Adrenal gland (tissue), 19 donors: ENCODE measurements at regions of chr12 and their contacts with region 1.

Region 1: GRCh38 chr12:127685931-127686330 is 581.0 kb upstream of the TMEM132C start:
- DNase-seq: no peak
- H3K4me3 ChIP-seq: no peak overlapping the region
- H3K27ac ChIP-seq: no peak overlapping the region
- H3K4me1 ChIP-seq: no peaks in the 10 kb centered on the region
- H3K27me3 ChIP-seq: no peaks in the 10 kb centered on the region
- CTCF ChIP-seq: no peak
- POLR2A ChIP-seq: no peak

Region 2: GRCh38 chr12:127280393-127281275 is 405.3 kb before region 1 on chr12:
- intact Hi-C with region 1: loop called in 1 of 2 experiments (anchors 10 kb)
- DNase-seq: peak; percentile 43 to 68 (median 58)
- H3K4me3 ChIP-seq: no peak overlapping the region
- H3K27ac ChIP-seq: no peak overlapping the region
- H3K4me1 ChIP-seq: no peaks in the 10 kb centered on the region
- H3K27me3 ChIP-seq: peaks cover 7% of the 10 kb centered on the region
- CTCF ChIP-seq: peak; percentile 69 to 95 (median 79)
- POLR2A ChIP-seq: no peak

Region 3: GRCh38 chr12:127911291-127911690 is 225.4 kb after region 1 on chr12:
- intact Hi-C with region 1: loop called in 1 of 2 experiments (anchors 10 kb)
- DNase-seq: peak; percentile 21 to 64 (median 32)
- H3K4me3 ChIP-seq: no peak overlapping the region
- H3K27ac ChIP-seq: no peak overlapping the region
- H3K4me1 ChIP-seq: peaks cover 7 to 17% of the 10 kb centered on the region in 2 donors
- H3K27me3 ChIP-seq: no peaks in the 10 kb centered on the region
- CTCF ChIP-seq: no peak
- POLR2A ChIP-seq: no peak